RWPE1 (cell line): ENCODE measurements at regions of chr17 and their contacts with region 1.

Region 1: GRCh38 chr17:45161019-45161825 is 453 bp upstream of the HEXIM2 start:
- DNase-seq: peak; percentile 97
- H3K27ac ChIP-seq: peak overlapping the region; percentile 95
- CTCF ChIP-seq: no peak

Region 2: DNA sequence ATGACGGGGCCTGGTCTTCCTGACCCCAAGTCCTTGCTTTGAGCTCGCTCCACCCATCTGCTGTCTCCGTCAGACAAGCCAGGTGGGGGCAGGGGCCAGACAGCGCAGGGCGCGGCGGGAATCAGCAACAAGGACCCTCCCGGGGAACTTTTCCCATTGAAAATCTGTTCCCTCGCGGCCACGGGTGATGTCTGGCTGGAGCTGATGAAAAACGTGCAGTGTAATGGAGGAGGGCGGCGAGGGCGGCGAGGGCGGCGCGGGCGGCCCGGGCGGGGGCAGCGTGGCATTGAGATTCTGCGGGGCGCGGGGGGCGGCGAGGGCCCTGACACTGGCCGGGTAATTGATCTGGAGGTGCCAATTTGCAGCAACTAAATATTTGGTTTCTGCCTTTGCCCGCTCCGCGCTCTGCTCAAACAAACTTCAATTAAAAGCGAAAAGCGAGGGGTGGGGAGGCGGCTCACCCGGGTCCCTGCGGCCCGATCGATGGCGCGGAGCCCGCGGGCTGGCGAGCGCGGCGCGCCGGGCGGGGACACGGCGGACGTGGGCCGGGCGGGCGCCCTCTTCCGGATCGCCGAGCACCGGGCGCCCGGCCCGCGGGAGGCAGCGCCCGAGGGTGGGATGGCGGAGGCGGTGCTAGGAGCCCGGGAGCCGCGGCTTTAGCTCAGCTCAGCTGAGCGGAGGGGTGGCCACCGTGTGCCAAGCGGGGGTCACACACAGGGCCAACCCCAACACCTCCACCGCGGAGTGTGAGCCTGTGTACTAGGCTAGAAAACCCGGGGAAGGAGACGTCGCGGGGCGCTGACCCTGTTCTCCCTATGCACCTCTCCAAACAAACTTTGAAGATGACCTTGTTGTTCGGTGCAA is 142.1 kb before region 1 on chr17:
- CTCF ChIA-PET with region 1: no interaction called
- POLR2A ChIA-PET with region 1: no interaction called
- DNase-seq: peak; percentile 59
- H3K27ac ChIP-seq: peak overlapping the region; percentile 67
- CTCF ChIP-seq: peak; percentile 83

Region 3: GRCh38 chr17:45110668-45111611 is 50.3 kb before region 1 on chr17:
- CTCF ChIA-PET with region 1: no interaction called
- POLR2A ChIA-PET with region 1: no interaction called
- DNase-seq: no peak
- H3K27ac ChIP-seq: peak overlapping the region; percentile 81
- CTCF ChIP-seq: no peak

Region 4: DNA sequence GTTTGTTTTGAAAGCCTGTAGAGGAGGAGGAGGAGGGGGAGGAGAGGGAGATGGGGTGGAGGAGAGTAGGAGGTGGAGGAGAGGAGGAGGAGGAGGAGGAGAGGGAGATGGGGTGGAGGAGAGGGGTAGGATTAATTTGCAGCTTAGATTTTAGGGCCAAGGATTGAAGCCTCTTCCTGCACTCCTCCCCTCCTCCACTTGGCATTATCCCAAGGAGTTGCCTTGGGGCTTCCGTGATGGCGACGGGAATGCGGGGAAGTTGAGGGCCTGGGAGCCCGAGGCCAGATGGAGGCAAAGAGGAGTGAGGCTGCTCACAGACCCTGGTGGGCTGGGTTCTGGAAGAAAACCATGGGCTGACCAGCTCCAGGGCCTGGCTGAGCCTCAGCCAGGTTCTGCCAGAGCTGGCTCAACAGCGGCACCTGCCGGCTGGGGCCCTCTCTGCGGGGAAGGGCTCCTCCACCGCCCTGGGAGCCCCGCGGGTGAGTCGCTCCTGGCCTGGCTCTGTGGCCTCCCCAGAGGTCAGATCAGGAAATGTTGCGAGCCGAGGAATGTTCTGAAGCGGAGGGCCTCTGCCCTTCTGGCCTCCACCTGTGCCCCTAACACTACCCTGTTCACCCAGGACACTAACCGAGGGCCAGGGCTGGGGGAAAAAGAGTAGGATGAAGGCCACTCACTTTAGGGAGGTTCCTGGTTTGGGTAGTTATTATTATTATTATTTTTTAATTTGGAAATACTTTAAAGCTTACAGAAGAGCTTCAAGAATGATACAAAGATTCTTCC is 36.5 kb after region 1 on chr17:
- CTCF ChIA-PET with region 1: interaction called, 15 read pairs
- POLR2A ChIA-PET with region 1: interaction called, 7 read pairs
- DNase-seq: peak; percentile 86
- H3K27ac ChIP-seq: peak overlapping the region; percentile 69
- CTCF ChIP-seq: peak; percentile 99